BJ (cell line): ENCODE measurements at regions of chr19 and their contacts with region 1.

Region 1: GRCh38 chr19:3163230-3163886 is 15.2 kb upstream of the S1PR4 start:
- DNase-seq: no peak
- H3K4me3 ChIP-seq: no peak overlapping the region
- H3K27me3 ChIP-seq: no peaks in the 10 kb centered on the region
- CTCF ChIP-seq: peak; percentile 96

Region 2: GRCh38 chr19:2962045-2962561 is 201.3 kb before region 1 on chr19:
- CTCF ChIA-PET with region 1: interaction called, 12 read pairs
- POLR2A ChIA-PET with region 1: no interaction called
- DNase-seq: peak; percentile 37
- H3K4me3 ChIP-seq: no peak overlapping the region
- H3K27me3 ChIP-seq: no peaks in the 10 kb centered on the region
- CTCF ChIP-seq: peak; percentile 60

Region 3: DNA sequence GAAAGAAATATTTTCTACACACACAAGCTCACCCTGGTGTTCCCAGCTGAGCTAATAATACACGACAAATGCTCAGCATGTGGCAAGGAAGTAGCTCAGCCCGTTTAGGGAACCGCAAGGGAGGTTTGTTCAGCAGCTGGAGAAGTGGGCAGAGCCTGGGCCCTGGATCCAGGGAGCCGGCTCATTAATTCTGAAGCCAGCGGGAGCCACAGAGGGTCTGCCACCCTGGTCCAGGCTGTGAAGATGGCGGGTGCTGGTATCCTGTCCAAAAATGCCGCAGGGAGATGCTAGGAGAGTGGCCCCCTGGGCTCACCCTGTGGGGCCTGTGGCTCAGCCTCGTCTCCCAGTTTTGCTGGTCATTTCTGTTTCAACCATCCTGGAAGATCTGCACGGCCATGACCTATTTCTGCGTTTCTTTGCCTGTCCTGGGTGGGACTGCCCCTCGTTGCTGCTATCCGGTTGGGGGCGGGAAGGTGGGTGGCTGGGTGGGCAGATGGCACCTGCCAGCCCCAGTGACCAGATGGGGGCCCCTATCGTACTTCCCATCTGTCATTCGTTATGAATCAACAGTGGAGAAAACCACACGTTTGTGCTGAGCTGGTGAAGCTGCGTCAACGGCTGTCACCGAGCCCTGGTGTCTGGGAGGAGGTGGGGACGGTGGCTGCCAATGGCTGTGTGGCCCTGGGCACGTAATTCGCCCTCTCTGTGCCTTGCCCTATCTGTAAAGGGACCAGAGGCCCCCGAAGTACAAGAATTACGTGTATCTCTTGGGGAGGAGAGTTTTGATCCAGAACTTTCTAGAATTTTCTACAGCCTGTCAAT is 30.2 kb before region 1 on chr19:
- CTCF ChIA-PET with region 1: interaction called, 103 read pairs
- POLR2A ChIA-PET with region 1: no interaction called
- DNase-seq: peak; percentile 63
- H3K4me3 ChIP-seq: no peak overlapping the region
- H3K27me3 ChIP-seq: no peaks in the 10 kb centered on the region
- CTCF ChIP-seq: no peak